ENCODE measurements at regions of chr22 and their contacts with region 1.

Region 1: GRCh38 chr22:50525390-50526068 is at the start of gene SCO2:
- DNase-seq: peak; percentile 98
- ATAC-seq: peak; percentile 62
- H3K4me3 Mint-ChIP-seq: peak within 1 kb of the TSS; percentile 97
- H3K27ac Mint-ChIP-seq: peak within 1 kb of the TSS; percentile 95
- H3K4me1 Mint-ChIP-seq: peaks cover 45% of the 10 kb centered on the region
- H3K27me3 Mint-ChIP-seq: no peaks in the 10 kb centered on the region
- total RNA-seq, gene SCO2: 11.7 to 13.9 TPM

Region 2: DNA sequence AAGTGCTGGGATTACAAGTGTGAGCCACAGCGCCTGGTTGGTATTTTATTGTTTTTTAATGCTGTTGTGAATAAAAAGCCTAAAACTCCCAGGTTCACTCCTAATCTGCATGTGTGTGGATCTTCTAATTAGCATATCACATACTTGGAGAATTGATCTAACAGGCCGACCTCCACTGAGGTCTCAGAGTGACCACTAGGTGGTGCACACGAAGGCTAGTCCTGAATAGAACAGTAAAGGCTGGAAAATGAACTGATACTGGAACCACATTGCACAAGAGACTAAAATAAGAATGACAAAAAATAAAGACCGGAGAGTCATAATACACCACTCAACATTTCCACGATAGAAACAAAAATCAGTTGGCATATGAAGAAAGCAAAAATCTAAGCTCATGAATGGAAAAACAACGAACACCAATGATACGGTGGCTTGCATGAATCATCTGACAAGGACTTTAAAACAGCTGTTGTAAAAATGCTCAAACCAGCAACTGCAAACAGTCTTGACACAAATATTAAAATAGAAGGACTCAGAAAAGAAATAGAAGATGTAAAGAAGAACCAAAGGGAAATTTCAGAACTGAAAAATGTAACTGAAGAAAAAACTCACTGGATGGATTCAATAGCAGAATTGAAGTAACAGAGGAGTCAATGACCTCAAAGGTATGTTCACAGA is 545.8 kb before region 1 on chr22:
- CTCF ChIA-PET with region 1: no interaction called
- POLR2A ChIA-PET with region 1: no interaction called
- DNase-seq: peak; percentile 46
- ATAC-seq: no peak
- H3K4me3 Mint-ChIP-seq: no peak overlapping the region
- H3K27ac Mint-ChIP-seq: no peak overlapping the region
- H3K4me1 Mint-ChIP-seq: peaks cover 14% of the 10 kb centered on the region
- H3K27me3 Mint-ChIP-seq: peaks cover 9% of the 10 kb centered on the region

Region 3: DNA sequence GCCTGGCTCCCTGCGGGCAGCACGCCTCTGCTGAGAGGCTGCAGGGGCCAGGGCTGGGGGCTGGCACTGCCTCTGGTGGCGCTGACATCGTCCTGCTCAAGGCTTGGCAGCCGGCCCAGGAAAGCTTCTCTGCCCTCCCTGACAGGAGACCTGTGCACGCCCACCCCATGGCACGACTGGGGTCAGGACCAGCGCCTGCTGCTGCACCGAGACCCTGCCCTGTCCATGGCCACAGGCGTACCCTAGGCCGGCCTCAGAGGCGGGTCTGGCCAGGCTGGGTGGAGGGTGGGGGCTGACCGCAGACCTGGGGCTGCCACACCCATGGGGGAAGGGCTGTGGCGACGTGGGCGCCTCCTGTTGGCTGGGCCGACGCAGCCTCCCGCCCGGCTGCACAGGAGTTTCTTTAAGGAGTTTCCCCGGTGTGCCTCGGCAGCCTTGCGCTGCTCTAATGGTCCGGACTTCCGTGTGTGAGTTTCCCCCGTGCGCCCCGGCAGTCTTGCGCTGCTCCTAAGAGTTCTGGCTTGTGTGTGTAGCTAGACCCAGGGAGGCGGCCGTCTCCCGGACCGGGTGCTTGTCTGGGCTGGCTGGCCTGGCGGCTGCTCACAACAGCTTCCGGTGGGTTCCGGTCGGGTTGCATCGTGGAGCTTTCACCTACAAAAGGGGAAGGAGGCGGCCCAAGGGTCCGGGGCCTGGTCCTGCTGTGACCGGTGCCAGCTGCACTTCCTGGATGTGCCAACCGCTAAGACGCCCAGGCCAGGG is 335.2 kb before region 1 on chr22:
- CTCF ChIA-PET with region 1: interaction called, 3 read pairs
- POLR2A ChIA-PET with region 1: interaction called, 10 read pairs
- DNase-seq: peak; percentile 85
- ATAC-seq: peak; percentile 56
- H3K4me3 Mint-ChIP-seq: peak overlapping the region; percentile 91
- H3K27ac Mint-ChIP-seq: peak overlapping the region; percentile 94
- H3K4me1 Mint-ChIP-seq: peaks cover 54% of the 10 kb centered on the region
- H3K27me3 Mint-ChIP-seq: no peaks in the 10 kb centered on the region

Region 4: DNA sequence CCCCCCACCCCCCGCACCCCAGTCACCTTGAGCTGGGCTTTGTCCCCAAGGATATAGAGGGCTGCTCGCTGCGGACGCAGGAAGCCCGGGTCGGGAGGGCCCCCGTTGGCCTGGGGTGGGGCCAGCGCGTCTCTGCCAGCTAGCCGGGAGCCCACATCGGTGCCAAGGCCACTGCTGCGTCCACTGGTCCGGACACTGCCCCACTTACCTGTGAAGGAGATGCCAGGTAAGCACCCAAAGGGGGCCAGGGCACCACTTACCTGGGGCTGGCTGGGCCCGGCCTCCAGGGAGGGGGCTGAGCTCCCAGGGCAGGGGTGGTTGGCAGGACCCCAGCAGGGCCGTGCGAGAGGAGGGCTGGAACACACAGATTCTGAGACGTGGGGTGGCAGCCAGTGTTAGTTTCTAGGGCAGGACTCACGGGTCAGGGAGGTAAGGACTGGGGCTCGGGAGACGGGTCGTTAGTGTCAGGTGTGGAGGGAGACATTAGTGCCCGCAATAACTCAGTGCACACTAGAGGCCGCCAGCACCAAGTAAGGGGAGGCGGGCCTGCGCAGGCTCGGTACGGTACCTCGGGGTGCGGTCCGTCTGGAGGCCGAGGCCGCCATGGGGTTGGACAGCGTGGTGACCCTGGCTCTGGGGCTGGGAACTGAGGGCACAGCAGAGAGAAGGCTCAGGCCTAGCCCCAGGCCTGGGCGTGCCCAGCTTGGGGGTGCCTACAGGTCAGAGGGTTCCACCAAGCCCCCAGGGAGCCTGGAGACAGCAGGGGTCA is 68.9 kb before region 1 on chr22:
- CTCF ChIA-PET with region 1: interaction called, 14 read pairs
- POLR2A ChIA-PET with region 1: interaction called, 5 read pairs
- DNase-seq: no peak
- ATAC-seq: peak; percentile 34
- H3K4me3 Mint-ChIP-seq: no peak overlapping the region
- H3K27ac Mint-ChIP-seq: no peak overlapping the region
- H3K4me1 Mint-ChIP-seq: peaks cover 2% of the 10 kb centered on the region
- H3K27me3 Mint-ChIP-seq: no peaks in the 10 kb centered on the region

Region 5: GRCh38 chr22:50474668-50475492 is 50.6 kb before region 1 on chr22 and contains the start of gene SBF1:
- CTCF ChIA-PET with region 1: interaction called, 37 read pairs
- POLR2A ChIA-PET with region 1: interaction called, 11 read pairs
- DNase-seq: peak; percentile 91
- ATAC-seq: peak; percentile 76
- H3K4me3 Mint-ChIP-seq: peak within 1 kb of the TSS; percentile 93
- H3K27ac Mint-ChIP-seq: peak within 1 kb of the TSS; percentile 84
- H3K4me1 Mint-ChIP-seq: peaks cover 57% of the 10 kb centered on the region
- H3K27me3 Mint-ChIP-seq: peaks cover 13% of the 10 kb centered on the region
- total RNA-seq, gene SBF1: 177 to 183 TPM

Region 6: GRCh38 chr22:50537765-50538164 is 12.2 kb after region 1 on chr22:
- CTCF ChIA-PET with region 1: interaction called, 116 read pairs
- POLR2A ChIA-PET with region 1: interaction called, 335 read pairs
- DNase-seq: no peak
- ATAC-seq: no peak
- H3K4me3 Mint-ChIP-seq: no peak overlapping the region
- H3K27ac Mint-ChIP-seq: peak overlapping the region; percentile 100
- H3K4me1 Mint-ChIP-seq: peaks cover 73% of the 10 kb centered on the region
- H3K27me3 Mint-ChIP-seq: no peaks in the 10 kb centered on the region

Region 7: DNA sequence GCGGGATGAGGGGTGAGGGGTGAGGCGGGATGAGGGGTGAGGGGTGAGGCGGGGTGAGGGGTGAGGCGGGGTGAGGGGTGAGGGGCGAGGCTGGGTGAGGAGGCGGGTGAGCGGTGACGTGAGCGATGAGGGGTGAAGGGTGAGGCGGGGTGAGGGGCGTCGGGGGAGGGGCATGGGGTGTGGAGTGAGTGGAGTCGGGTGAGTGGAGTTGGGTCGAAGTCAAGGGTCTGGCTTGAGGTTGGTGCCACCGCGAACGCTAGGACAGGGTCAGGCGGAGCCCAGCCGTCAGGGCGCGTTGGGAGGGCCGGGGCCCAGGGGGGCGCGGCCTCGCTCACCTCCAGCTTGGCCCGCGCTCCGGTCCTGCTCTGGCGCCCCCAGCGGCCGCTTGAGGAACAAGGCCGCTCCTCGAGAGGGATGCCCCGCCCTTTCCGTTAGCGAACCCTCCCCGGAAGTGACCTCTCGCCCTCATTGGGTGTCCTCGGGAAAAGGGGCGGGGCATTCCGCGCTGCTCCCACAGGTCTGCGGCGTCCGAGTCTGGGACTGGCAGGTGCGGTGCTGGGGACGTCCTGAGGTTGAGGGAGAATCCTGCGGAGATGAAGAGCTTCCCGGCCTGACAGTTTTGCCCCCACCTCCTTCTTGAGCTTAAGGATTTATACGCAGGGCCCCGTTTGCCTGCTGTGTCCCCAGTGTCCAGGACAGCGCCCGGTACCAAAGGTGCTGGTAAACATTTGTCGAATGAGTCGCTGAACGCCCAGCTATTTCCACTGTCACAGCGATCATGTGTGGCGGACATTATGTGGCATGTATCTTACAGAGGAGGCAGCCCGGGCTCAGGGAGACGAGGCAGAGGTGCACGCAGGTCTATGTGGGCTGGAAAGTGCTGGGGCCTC is 37.2 kb after region 1 on chr22 and contains the start of gene SYCE3:
- CTCF ChIA-PET with region 1: interaction called, 40 read pairs
- POLR2A ChIA-PET with region 1: interaction called, 58 read pairs
- DNase-seq: peak; percentile 98
- ATAC-seq: peak; percentile 97
- H3K4me3 Mint-ChIP-seq: peak within 1 kb of the TSS; percentile 91
- H3K27ac Mint-ChIP-seq: peak within 1 kb of the TSS; percentile 85
- H3K4me1 Mint-ChIP-seq: peaks cover 19% of the 10 kb centered on the region
- H3K27me3 Mint-ChIP-seq: peaks cover 16% of the 10 kb centered on the region
- total RNA-seq, gene SYCE3: not detected

Region 8: GRCh38 chr22:50582562-50583293 is 57.2 kb after region 1 on chr22 and contains the start of gene CHKB:
- CTCF ChIA-PET with region 1: interaction called, 10 read pairs
- POLR2A ChIA-PET with region 1: interaction called, 31 read pairs
- DNase-seq: peak; percentile 99
- ATAC-seq: peak; percentile 96
- H3K4me3 Mint-ChIP-seq: peak within 1 kb of the TSS; percentile 98
- H3K27ac Mint-ChIP-seq: peak within 1 kb of the TSS; percentile 94
- H3K4me1 Mint-ChIP-seq: peaks cover 42% of the 10 kb centered on the region
- H3K27me3 Mint-ChIP-seq: no peaks in the 10 kb centered on the region
- total RNA-seq, gene CHKB: 98.9 to 101 TPM